Left ventricle myocardium inferior (tissue), 1 donor: ENCODE measurements at regions of chr12 and their contacts with region 1.

Region 1: GRCh38 chr12:12704593-12705230 is 8.7 kb upstream of the GPR19 start:
- DNase-seq: no peak
- H3K4me3 ChIP-seq: no peak overlapping the region
- H3K27ac ChIP-seq: no peak overlapping the region
- H3K4me1 ChIP-seq: peaks cover 6% of the 10 kb centered on the region
- H3K27me3 ChIP-seq: no peaks in the 10 kb centered on the region
- CTCF ChIP-seq: peak; percentile 82

Region 2: GRCh38 chr12:12645485-12645884 is 59.2 kb before region 1 on chr12:
- intact Hi-C with region 1: loop called (anchors 10 kb)
- DNase-seq: no peak
- H3K4me3 ChIP-seq: no peak overlapping the region
- H3K27ac ChIP-seq: no peak overlapping the region
- H3K4me1 ChIP-seq: no peaks in the 10 kb centered on the region
- H3K27me3 ChIP-seq: no peaks in the 10 kb centered on the region
- CTCF ChIP-seq: peak; percentile 55

Region 3: GRCh38 chr12:13100882-13101769 is 396.4 kb after region 1 on chr12:
- intact Hi-C with region 1: no loop called
- DNase-seq: peak; percentile 91
- H3K4me3 ChIP-seq: peak overlapping the region; percentile 70
- H3K27ac ChIP-seq: peak overlapping the region; percentile 93
- H3K4me1 ChIP-seq: peaks cover 54% of the 10 kb centered on the region
- H3K27me3 ChIP-seq: no peaks in the 10 kb centered on the region
- CTCF ChIP-seq: peak; percentile 19